Activated T-helper 1 cell treated with anti-CD3 and anti-CD28 coated beads, Interleukin-12 subunit alpha, Interleukin-12 subunit beta, Interleukin-2, Interleukin-4 antibody, amounts not matched to agents 30 ng/mL and 10 ng/mL and 1 ng/mL, durations not matched to agents 14 hours and 24 hours and 36 hours (primary cell): ENCODE measurements at regions of chr12 and their contacts with region 1.

Region 1: GRCh38 chr12:114668151-114668885 is 15.7 kb downstream of the TBX3 start:
- DNase-seq: no peak
- H3K4me3 Mint-ChIP-seq: no peak overlapping the region
- H3K27ac Mint-ChIP-seq: no peak overlapping the region
- H3K4me1 Mint-ChIP-seq: no peaks in the 10 kb centered on the region
- H3K27me3 Mint-ChIP-seq: peaks cover 76% of the 10 kb centered on the region

Region 2: DNA sequence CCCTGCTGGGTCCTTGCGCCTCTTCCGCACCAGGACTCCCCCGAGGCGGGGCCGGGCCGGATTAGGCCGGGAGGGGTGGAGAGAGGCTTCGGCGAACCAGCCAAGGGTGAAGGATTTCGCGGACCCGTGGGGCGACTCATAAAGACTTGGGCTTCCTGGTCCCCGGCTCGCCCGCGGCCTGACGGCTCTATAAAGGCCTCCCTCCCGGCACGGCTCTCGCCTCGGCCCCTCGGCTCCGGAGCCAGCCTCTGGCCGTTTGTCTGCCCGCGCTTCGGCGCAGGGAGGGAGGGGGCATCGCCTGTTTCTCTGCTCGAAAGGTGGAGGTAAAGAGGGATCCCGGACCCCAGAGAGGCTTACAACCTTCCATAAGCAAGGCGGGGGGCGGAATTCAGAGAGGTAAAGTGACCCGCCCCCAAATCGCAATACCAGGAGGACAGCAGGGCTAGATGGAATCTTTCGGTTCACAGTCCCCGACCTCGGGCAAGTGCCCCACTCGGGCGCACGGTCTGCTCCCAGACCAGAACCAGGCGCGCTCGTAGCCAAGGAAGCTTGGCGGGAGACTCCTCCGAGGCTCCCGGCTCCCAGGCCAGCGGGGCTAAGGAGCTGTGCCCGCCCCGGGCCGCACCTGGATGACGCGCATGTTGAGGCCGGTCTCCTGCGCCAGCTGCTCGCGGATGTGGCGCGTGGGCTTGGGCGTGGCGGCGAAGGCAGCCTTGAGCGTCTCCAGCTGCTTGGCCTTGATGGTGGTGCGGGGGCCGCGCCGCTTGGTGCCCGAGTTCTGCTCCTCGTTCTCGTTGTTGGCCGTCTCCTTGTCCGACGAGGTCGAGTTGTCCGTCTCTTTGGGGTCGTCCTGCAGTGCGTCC is 1200.6 kb before region 1 on chr12:
- intact Hi-C with region 1: loop called (anchors 5 kb)
- DNase-seq: no peak
- H3K4me3 Mint-ChIP-seq: no peak overlapping the region
- H3K27ac Mint-ChIP-seq: no peak overlapping the region
- H3K4me1 Mint-ChIP-seq: peaks cover 6% of the 10 kb centered on the region
- H3K27me3 Mint-ChIP-seq: peaks cover 58% of the 10 kb centered on the region

Region 3: DNA sequence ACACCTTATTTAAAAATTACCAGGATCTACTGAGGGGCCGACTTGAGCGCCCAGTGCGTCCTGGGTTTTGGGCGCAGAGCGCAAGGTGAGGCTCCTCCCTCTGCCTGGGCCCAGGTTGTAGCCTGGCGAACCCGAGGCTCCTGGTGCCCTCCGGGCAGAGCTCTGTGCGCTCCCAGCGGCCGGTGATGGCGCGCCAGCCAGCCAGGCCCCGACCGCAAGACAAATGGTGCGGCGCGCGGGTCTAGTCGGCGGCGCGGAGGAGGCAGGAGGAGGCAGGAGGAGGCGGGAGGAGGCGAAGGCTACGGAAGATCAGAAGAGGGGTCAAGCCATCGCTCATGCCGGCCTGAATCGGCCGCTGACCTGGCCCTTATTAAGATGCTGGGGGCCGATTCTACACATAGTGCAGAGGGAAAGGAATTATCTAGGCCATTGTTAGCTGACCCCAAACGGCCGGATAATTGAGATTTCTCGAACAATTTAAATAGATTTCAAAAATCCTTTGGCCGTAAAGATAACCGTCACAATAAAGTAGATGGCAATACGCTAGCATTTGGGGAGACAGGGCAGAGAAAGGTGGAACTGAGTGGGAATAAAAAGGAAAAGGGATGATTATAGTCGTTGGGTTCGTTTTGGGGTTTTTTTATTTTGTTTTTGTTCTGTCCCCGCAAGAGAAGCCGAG is 265.2 kb before region 1 on chr12:
- intact Hi-C with region 1: loop called (anchors 5 kb)
- DNase-seq: no peak
- H3K4me3 Mint-ChIP-seq: no peak overlapping the region
- H3K27ac Mint-ChIP-seq: peak overlapping the region; percentile 63
- H3K4me1 Mint-ChIP-seq: peaks cover 3% of the 10 kb centered on the region
- H3K27me3 Mint-ChIP-seq: peaks cover 83% of the 10 kb centered on the region

Region 4: DNA sequence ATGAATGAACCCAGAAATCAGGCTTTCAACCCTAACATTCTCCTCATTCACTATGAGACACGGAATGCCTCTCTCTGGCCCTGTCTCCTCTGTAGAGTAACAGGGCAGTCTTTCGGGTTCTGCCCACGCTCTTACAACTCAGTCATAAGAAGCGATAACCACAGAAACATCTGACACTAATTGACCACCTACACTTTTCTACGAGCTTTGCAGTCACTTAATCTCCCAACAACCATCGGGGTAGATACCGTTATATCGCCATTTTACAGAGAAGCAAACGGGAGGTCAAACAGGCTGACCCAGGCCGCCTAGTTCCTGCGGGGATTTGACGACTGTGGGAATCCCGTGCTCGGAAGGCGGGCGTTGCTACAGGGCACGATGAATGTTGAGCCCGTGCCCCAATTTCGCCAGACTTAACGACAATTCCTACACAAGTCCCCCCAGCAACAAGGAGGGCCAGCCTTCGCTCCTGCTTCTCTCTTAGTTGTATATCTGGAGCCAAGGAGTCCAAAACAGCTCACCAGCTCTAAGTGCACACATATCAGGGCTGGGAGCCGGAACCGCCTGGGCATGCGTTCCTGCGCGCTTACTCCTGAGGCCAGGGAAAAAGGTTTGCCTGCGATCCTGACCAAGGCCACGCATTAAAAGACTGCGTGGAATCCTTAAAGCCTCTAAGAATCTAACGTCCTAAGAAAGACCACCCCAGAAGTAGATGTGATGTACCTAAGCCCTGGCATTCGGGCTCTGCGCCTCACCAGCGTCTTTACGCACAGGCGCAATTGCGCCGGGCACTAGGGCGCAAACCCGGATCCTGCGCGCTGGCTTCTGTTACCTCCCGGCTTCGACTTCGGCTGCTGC is 223.7 kb before region 1 on chr12:
- intact Hi-C with region 1: loop called (anchors 5 kb)
- DNase-seq: no peak
- H3K4me3 Mint-ChIP-seq: no peak overlapping the region
- H3K27ac Mint-ChIP-seq: no peak overlapping the region
- H3K4me1 Mint-ChIP-seq: no peaks in the 10 kb centered on the region
- H3K27me3 Mint-ChIP-seq: peaks cover 78% of the 10 kb centered on the region

Region 5: DNA sequence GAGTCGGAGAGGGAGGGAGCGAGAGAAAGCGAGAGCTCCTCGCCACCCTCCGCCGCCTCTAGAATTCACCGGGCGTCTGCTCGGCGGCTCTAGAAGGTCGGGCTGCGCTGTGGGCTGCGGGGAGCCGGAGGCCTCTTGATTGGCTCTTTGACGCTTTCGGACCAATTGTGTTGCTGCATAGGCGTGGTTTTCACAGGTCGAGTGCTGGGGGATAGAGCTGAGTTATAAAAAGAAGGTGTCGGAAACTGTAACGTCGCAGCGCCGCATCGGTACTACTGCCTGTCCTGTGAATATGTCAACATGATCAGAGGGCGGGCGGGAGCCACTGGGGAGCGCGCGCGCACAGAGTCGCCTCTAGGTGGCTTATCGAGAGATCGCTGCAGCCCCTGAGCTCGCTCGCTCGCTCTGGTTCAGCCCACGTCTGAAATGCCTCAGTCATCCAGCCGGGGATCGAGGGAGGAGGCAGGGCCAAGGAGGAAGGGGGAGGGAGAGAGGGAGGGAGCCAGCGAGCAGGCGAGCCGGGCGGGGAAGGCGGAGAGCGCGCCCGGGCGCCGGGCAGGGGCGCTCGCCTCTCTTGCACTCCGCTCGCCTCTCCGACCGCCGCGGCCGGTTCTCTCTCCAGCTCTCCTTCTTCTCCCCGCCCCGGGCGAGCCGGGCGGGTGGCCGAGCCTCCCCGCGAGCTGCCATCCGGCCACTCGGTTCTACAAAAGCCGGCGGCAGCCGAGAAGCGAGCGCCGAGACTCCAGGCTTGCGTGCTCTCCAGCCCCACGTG is 16.0 kb after region 1 on chr12 and contains the start of gene TBX3:
- intact Hi-C with region 1: loop called (anchors 2 kb)
- DNase-seq: peak; percentile 1
- H3K4me3 Mint-ChIP-seq: peak within 1 kb of the TSS; percentile 33
- H3K27ac Mint-ChIP-seq: peak within 1 kb of the TSS; percentile 81
- H3K4me1 Mint-ChIP-seq: peaks cover 13% of the 10 kb centered on the region
- H3K27me3 Mint-ChIP-seq: peaks cover 84% of the 10 kb centered on the region
- total RNA-seq, gene TBX3: not detected in 2 replicates

Region 6: DNA sequence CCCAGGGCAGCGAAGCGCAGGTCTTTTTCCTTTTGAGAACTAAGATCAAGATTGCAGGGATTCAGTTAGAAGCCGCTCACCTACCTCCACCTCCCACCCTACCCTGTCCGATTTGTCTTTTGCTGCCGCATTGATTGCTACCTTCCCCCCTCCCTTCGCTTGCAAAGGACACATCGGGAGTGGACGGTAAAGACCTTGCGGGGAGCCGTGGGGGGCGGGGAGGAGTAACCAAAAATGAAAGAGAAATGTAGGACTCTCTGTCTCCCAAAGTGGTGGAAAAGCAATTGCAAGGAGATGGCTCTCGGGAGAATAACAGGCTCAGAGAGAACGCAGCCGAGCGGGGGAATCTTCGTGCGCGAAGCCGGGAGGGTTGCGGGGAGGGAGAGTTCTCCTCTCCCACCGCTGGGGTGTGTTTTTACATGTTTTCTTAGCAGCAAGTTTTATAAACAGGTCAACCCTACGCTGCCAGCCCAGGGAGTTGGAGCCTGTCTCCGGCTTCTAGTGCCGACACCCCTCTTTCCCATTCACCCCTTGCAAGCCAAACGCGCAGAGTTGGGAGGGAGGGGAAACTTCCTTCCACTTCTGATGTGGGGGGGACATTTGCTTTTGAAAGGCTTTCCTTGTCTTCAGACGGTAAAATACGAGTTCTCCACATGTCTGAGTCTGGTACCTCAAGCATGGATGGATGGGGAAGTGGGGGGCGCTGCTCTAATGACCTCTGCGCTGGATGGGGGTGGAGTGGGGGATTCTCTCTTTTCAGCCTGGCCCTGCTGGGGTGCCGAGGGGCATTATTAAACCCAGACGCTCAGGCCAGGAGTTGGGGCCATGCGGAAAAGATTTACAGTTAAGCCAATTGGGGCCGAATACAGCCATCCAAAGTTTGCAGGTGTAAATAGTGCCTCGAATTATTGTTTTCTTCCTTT is 24.5 kb after region 1 on chr12:
- intact Hi-C with region 1: loop called (anchors 2 kb)
- DNase-seq: no peak
- H3K4me3 Mint-ChIP-seq: no peak overlapping the region
- H3K27ac Mint-ChIP-seq: no peak overlapping the region
- H3K4me1 Mint-ChIP-seq: no peaks in the 10 kb centered on the region
- H3K27me3 Mint-ChIP-seq: peaks cover 92% of the 10 kb centered on the region